Adrenal gland (tissue), 19 donors: ENCODE measurements at regions of chr13 and their contacts with region 1.

Region 1: DNA sequence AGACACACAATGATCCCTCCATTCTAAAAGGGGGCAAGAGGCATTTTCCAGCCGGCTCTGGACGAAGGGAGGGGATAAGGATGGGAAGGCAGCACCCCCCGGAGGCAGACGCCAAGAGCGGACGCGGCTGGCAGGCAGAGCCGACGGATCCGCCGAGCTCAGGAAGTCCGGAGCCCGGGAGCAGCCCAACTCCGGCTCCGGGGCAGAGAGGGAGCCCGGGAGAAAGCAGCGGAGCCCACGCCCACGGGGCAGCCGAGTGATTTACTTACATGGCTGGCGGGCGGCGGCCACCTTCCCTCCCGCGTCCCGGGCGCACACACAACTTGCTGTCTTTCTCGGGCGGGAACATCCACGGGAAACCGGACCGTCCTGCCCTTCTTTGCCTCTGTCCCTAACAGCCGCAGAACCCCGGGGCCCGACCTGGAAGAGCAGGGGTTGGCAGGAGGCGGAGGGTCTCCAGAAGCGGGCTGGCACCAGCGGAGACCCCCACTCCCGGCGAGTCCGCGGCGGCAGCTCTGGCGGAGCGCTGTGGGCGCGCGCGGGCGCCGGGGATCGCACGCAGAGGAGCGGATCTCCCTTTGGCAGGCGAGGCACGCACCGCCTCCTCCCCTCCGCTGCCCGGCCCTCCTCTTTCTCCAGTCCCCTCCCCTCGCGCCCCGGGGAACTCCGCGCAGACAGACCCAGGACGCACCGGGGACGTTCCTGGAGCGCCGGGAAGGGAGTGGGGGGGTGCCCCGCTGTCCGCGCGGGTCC is at the start of gene LHFPL6:
- DNase-seq: peak; percentile 74 to 86 (median 82)
- H3K4me3 ChIP-seq: peak within 1 kb of the TSS; percentile 71 to 99 (median 88)
- H3K27ac ChIP-seq: peak within 1 kb of the TSS; percentile 16 to 93 (median 82)
- H3K4me1 ChIP-seq: no peaks in the 10 kb centered on the region
- H3K27me3 ChIP-seq: no peaks in the 10 kb centered on the region
- CTCF ChIP-seq: peak in 3 of 6 experiments; percentile 3 to 32 (median 27)
- POLR2A ChIP-seq: peak in 1 of 2 donors; percentile 71
- total RNA-seq, gene LHFPL6: 28.9 to 113 (median 49.6) TPM

Region 2: DNA sequence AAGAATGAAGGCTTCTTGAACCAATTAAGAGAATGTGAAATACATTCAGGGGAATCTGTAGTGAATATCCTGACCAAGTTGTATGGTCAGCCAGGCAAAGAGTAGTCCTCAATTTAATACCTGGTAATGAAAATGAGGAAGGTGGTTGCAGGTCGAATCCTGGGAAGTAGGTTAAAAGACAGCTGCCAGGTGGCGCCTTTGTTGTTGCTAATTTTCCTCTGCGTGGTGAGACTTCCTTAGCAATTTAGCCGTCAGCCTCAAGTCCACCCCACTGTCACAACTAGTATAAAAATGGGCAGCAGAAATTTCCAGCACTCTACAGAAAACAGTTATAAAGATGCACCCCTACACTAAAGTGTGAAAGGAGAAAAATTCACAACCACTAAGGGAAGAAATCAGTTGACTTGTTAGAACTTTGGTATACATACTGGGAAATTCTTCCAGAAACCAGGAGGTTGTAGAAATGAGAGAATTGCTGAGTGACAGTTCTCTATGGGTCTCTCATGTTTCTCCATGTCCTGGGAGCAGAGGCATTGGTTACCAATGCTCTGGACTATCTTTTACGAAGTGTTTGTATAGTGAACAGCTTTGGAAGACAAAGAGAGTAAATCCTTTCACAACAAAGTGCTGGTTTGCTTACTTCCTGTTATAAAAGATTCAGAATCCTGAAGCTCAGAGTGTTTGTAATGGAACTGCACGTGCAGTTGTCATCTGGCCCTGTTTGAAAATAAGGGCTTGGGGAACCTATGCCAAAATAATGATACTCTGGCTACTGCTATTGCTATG is 328.6 kb before region 1 on chr13:
- intact Hi-C with region 1: loop called in 1 of 2 experiments (anchors 10 kb)
- DNase-seq: no peak
- H3K4me3 ChIP-seq: no peak overlapping the region
- H3K27ac ChIP-seq: no peak overlapping the region
- H3K4me1 ChIP-seq: no peaks in the 10 kb centered on the region
- H3K27me3 ChIP-seq: no peaks in the 10 kb centered on the region
- CTCF ChIP-seq: no peak
- POLR2A ChIP-seq: no peak

Region 3: DNA sequence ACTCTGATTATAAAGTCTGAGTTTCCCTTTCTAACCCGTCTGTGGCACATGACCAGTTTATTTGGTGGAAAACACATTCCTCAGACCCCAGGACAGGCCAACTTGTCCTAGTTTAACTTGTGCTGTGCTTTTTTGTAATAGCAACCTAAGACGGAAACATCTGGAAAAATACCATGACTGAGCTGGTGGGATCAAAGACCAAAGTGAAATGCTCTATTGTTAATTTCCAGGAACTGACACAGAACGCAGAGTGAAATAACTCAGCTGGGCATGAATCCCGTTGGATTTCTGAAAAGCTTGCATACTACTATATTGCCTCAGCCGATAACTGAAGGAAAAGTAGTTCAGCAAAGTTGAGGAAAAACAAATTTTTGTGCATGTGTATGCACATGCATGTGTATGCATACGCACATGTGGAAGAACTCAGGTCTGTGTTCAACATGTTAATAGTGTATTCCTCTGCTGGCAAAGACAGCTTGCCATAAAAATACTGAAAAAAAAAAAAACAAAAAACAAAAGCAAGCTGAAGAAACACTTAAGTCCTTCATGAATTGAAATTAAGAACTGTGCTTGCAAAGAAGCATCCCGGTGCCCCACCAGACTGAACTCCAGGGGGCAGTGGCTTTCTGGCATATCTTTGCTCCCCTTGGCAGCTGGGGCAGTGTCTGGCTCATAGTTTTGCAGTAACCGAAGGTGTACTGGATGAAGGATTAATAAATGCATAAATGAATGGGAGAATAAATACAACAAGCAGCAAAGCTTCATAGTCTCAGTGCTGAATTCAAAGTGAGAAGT is 187.6 kb before region 1 on chr13:
- intact Hi-C with region 1: loop called in 1 of 2 experiments (anchors 10 kb)
- DNase-seq: peak; percentile 29 to 74 (median 59)
- H3K4me3 ChIP-seq: no peak overlapping the region
- H3K27ac ChIP-seq: peak overlapping the region in 2 of 5 donors; percentile 36 to 57
- H3K4me1 ChIP-seq: peaks cover 0 to 32% of the 10 kb centered on the region in 2 donors
- H3K27me3 ChIP-seq: no peaks in the 10 kb centered on the region
- CTCF ChIP-seq: peak; percentile 19 to 58 (median 50)
- POLR2A ChIP-seq: no peak

Region 4: GRCh38 chr13:39484506-39485313 is 118.1 kb before region 1 on chr13:
- intact Hi-C with region 1: no loop called
- DNase-seq: no peak
- H3K4me3 ChIP-seq: no peak overlapping the region
- H3K27ac ChIP-seq: no peak overlapping the region
- H3K4me1 ChIP-seq: no peaks in the 10 kb centered on the region
- H3K27me3 ChIP-seq: no peaks in the 10 kb centered on the region
- CTCF ChIP-seq: no peak
- POLR2A ChIP-seq: no peak